Calu3 (cell line): ENCODE measurements at regions of chr11 and their contacts with region 1.

Region 1: GRCh38 chr11:5712507-5712906 is 22.9 kb downstream of the TRIM22 start:
- DNase-seq: no peak
- H3K4me3 Mint-ChIP-seq: no peak overlapping the region
- H3K27ac Mint-ChIP-seq: no peak overlapping the region
- H3K4me1 Mint-ChIP-seq: no peaks in the 10 kb centered on the region
- H3K27me3 Mint-ChIP-seq: peaks cover 31% of the 10 kb centered on the region
- CTCF ChIP-seq: no peak

Region 2: GRCh38 chr11:5476184-5476819 is 236.2 kb before region 1 on chr11:
- CTCF ChIA-PET with region 1: no interaction called
- intact Hi-C with region 1: loop called (anchors 1 kb)
- DNase-seq: peak; percentile 54
- H3K4me3 Mint-ChIP-seq: no peak overlapping the region
- H3K27ac Mint-ChIP-seq: no peak overlapping the region
- H3K4me1 Mint-ChIP-seq: no peaks in the 10 kb centered on the region
- H3K27me3 Mint-ChIP-seq: peaks cover 21% of the 10 kb centered on the region
- CTCF ChIP-seq: peak; percentile 41

Region 3: DNA sequence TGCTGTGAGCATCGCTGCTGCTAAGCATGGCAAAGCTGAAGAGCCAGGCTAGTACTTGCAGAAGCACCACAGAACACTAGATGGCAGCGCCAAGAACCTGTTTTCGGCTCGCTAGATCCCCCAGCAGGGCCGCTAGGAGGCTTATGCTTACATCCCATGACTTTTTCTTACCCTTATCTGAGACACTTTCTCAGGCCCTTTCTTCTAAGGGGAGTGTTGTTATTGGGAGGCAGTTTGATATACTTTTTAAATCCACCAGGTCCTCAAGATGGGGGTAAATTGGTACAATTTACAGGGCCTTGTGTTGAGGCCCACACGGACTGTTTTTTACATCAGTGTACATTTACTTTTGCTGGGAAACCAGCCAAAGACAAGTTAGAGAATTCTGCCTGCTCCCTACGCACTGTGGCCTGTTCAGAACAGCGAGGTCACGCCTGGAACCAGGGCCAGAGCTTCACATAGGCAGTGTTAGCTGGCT is 112.1 kb before region 1 on chr11:
- CTCF ChIA-PET with region 1: no interaction called
- intact Hi-C with region 1: loop called (anchors 2 kb)
- DNase-seq: peak; percentile 72
- H3K4me3 Mint-ChIP-seq: no peak overlapping the region
- H3K27ac Mint-ChIP-seq: no peak overlapping the region
- H3K4me1 Mint-ChIP-seq: peaks cover 27% of the 10 kb centered on the region
- H3K27me3 Mint-ChIP-seq: no peaks in the 10 kb centered on the region
- CTCF ChIP-seq: peak; percentile 81

Region 4: GRCh38 chr11:5684646-5685362 is 27.7 kb before region 1 on chr11 and contains the start of gene TRIM5:
- CTCF ChIA-PET with region 1: no interaction called
- intact Hi-C with region 1: loop called (anchors 2 kb)
- DNase-seq: peak; percentile 88
- H3K4me3 Mint-ChIP-seq: peak within 1 kb of the TSS; percentile 94
- H3K27ac Mint-ChIP-seq: peak within 1 kb of the TSS; percentile 99
- H3K4me1 Mint-ChIP-seq: peaks cover 13% of the 10 kb centered on the region
- H3K27me3 Mint-ChIP-seq: no peaks in the 10 kb centered on the region
- CTCF ChIP-seq: peak; percentile 32
- total RNA-seq, gene TRIM5: 36.8 and 44.1 TPM in 2 replicates